ENCODE measurements at regions of chr2 and their contacts with region 1.

Region 1: DNA sequence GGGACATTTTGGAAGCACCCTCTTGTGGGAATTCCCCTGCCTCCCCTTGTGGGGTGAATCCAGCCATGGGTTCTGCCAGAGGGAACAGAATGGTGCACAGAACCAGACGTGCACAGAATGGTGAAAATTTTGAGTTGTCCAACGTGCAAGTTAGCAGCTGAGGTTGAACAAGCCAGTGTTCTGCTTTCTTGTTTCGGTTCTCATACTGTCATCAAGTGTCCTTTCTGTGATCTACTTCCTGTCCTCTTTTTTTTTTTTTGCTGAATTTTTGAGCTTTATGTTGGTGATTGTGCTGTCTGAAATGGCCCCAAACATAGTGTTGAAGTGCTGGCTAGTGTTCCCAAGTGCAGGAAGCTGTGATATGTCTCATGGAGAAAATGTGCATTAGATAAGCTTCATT is 21.5 kb upstream of the REEP1 start:
- DNase-seq: no peak
- H3K4me3 ChIP-seq: no peak overlapping the region
- H3K27ac ChIP-seq: no peak overlapping the region
- H3K4me1 ChIP-seq: no peaks in the 10 kb centered on the region
- H3K27me3 ChIP-seq: peaks cover 7% of the 10 kb centered on the region; the same call in 1 of the 2 replicates
- CTCF ChIP-seq: no peak

Region 2: GRCh38 chr2:86204458-86204857 is 154.5 kb before region 1 on chr2:
- CTCF ChIA-PET with region 1: interaction called, 10 read pairs
- POLR2A ChIA-PET with region 1: no interaction called
- intact Hi-C with region 1: no loop called
- DNase-seq: no peak
- H3K4me3 ChIP-seq: no peak overlapping the region
- H3K27ac ChIP-seq: no peak overlapping the region
- H3K4me1 ChIP-seq: peaks cover 14% of the 10 kb centered on the region
- H3K27me3 ChIP-seq: no peaks in the 10 kb centered on the region
- CTCF ChIP-seq: no peak

Region 3: DNA sequence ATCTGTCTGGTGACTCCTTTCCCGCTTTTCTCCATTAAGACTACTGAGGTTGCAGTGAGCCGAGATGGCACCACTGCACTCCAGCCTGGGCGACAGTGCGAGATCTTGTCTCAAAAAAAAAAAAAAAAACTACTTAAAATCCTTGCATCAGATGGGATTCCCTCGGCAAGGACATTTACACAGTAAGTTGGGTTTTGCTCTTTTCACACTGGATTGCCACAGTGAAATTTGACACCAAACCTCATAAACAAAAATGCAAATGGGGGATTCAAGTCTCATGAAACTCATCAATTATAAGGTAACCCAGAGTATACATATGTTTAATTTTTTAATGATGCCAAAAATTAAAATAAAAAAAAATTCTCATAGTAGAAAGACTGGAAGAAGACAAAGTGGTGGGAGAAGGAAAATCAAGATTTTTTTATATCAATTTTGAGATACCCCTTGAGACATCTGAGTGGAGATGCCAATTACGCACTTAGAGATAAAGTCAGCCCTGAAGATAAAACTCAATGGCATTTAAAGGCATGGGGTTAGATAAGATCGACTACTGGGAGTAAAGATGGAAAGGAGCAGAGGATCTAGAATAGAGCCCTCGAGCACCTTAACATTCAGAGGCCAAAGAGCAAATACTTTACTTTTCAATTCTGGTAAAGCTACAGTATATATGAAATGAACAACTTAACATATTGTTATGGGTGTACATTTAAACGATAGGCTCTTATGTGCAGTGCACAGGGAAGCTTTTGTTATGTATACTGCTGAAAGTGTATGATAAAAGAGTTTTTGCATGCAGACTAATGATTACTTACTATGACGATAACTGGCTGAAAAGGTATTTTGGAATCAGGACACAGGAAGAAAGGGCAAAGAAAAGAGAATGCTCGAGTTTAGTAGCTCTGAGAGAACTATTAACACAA is 166.7 kb after region 1 on chr2:
- CTCF ChIA-PET with region 1: no interaction called
- POLR2A ChIA-PET with region 1: no interaction called
- intact Hi-C with region 1: no loop called
- DNase-seq: no peak
- H3K4me3 ChIP-seq: no peak overlapping the region
- H3K27ac ChIP-seq: no peak overlapping the region
- H3K4me1 ChIP-seq: no peaks in the 10 kb centered on the region
- H3K27me3 ChIP-seq: no peaks in the 10 kb centered on the region
- CTCF ChIP-seq: no peak

Measured in PC-9 (cell line).